Activated CD4-positive, alpha-beta memory T cell treated with anti-CD3 and anti-CD28 coated beads for 36 hours (primary cell): ENCODE measurements at regions of chr6 and their contacts with region 1.

Region 1: GRCh38 chr6:436308-437036 is 44.9 kb downstream of the IRF4 start:
- DNase-seq: no peak
- H3K4me3 Mint-ChIP-seq: no peak overlapping the region
- H3K27ac Mint-ChIP-seq: no peak overlapping the region
- H3K4me1 Mint-ChIP-seq: peaks cover 43% of the 10 kb centered on the region
- H3K27me3 Mint-ChIP-seq: no peaks in the 10 kb centered on the region

Region 2: GRCh38 chr6:168865-169455 is 267.5 kb before region 1 on chr6:
- CTCF ChIA-PET with region 1: no interaction called
- POLR2A ChIA-PET with region 1: no interaction called
- intact Hi-C with region 1: no loop called
- DNase-seq: no peak
- H3K4me3 Mint-ChIP-seq: no peak overlapping the region
- H3K27ac Mint-ChIP-seq: no peak overlapping the region
- H3K4me1 Mint-ChIP-seq: no peaks in the 10 kb centered on the region
- H3K27me3 Mint-ChIP-seq: peaks cover 1% of the 10 kb centered on the region

Region 3: GRCh38 chr6:305371-306206 is 130.9 kb before region 1 on chr6:
- CTCF ChIA-PET with region 1: no interaction called
- POLR2A ChIA-PET with region 1: no interaction called
- intact Hi-C with region 1: no loop called
- DNase-seq: peak; percentile 37
- H3K4me3 Mint-ChIP-seq: no peak overlapping the region
- H3K27ac Mint-ChIP-seq: no peak overlapping the region
- H3K4me1 Mint-ChIP-seq: no peaks in the 10 kb centered on the region
- H3K27me3 Mint-ChIP-seq: no peaks in the 10 kb centered on the region

Region 4: GRCh38 chr6:399785-400534 is 36.5 kb before region 1 on chr6:
- CTCF ChIA-PET with region 1: interaction called, 3 read pairs
- POLR2A ChIA-PET with region 1: interaction called, 14 read pairs
- intact Hi-C with region 1: no loop called
- DNase-seq: peak; percentile 76
- H3K4me3 Mint-ChIP-seq: peak overlapping the region; percentile 64
- H3K27ac Mint-ChIP-seq: peak overlapping the region; percentile 88
- H3K4me1 Mint-ChIP-seq: peaks cover 94% of the 10 kb centered on the region
- H3K27me3 Mint-ChIP-seq: no peaks in the 10 kb centered on the region

Region 5: DNA sequence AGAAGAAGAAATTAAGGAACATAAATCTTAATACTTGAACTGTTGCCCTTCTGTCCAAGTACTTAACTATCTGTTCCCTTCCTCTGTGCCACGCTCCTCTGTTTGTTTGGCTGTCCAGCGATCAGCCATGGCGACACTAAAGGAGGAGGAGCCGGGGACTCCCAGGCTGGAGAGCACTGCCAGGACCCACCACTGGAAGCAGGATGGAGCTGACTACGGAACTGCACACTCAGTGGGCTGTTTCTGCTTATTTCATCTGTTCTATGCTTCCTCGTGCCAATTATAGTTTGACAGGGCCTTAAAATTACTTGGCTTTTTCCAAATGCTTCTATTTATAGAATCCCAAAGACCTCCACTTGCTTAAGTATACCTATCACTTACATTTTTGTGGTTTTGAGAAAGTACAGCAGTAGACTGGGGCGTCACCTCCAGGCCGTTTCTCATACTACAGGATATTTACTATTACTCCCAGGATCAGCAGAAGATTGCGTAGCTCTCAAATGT is 27.8 kb before region 1 on chr6:
- CTCF ChIA-PET with region 1: interaction called, 5 read pairs
- POLR2A ChIA-PET with region 1: interaction called, 17 read pairs
- intact Hi-C with region 1: no loop called
- DNase-seq: no peak
- H3K4me3 Mint-ChIP-seq: peak overlapping the region; percentile 14
- H3K27ac Mint-ChIP-seq: peak overlapping the region; percentile 62
- H3K4me1 Mint-ChIP-seq: peaks cover 66% of the 10 kb centered on the region
- H3K27me3 Mint-ChIP-seq: no peaks in the 10 kb centered on the region

Region 6: DNA sequence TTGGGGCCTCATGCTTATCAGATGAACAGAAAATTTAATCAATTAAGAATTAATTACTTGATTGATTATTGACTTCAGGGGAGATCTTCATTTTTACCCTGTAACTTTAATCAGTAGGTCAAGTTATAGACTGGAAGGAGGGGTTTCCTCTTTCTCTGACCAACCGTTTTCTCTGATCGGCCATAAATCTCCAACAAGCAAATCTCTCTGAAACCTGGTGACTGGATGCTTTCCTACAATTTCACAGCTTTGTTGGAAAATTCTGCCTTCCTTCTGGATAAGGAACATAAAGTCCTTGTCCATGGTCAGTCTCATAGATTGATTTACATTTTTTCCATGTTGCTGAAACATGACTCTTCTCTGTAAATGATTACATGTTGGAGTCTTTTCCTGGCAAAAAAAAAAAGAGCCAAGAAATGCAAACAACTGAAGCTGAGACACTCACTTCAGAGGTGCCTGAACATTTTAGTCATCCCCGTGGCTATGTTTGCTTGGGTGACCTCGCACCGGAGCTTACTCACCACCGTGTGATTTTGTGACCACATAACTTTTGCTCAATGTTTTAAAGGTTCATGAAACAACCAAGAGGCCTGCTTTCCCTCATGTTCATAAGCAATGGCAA is 13.9 kb before region 1 on chr6:
- CTCF ChIA-PET with region 1: interaction called, 3 read pairs
- POLR2A ChIA-PET with region 1: interaction called, 4 read pairs
- intact Hi-C with region 1: loop called (anchors 1 kb)
- DNase-seq: peak; percentile 87
- H3K4me3 Mint-ChIP-seq: no peak overlapping the region
- H3K27ac Mint-ChIP-seq: peak overlapping the region; percentile 87
- H3K4me1 Mint-ChIP-seq: peaks cover 30% of the 10 kb centered on the region
- H3K27me3 Mint-ChIP-seq: no peaks in the 10 kb centered on the region

Region 7: DNA sequence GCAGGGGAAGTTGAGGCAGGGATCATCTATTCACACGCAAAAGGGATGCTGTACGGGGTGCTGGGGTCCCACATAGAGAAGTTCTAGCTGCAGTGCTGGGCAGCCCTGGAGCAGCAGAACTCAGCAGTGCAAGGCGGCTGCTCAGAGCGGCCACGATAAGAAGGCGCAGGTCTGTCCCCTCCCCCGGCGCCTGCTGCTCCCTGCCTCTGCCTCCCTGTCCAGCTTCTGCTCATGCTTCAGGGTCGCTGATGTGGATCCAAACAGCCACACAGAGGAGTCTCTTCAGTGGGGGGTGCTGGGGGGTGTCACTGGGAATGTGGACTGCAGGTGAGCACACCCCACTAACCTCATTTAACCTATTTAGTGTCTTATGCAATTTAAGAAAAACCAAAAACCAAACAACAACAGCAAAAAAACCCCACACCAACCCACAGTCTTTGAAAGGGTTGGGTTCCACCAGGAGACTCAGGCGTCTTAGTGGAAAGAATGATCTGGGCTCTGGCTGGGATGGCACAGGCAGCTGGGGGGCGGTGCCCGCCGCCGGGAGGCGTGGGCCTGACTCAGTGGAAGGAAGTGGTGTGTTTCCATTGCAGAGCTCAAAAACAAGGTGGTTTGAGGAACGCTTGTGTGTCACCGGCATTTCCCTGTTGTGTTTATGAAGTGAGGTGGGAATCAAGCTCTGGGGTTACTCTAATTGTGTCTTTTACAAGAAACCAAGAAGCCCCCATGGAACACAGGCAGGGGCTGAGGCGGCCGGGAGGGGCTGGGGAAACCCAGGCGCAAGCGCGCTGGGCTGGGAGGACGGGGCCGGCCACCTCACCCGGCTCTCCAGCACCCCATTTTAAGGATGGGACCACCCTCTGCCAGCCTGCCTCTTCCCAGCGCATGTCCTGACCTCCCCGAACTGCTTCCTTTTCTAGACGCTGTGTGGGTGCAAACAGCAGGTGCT is 10.2 kb after region 1 on chr6:
- CTCF ChIA-PET with region 1: interaction called, 8 read pairs
- POLR2A ChIA-PET with region 1: interaction called, 51 read pairs
- intact Hi-C with region 1: loop called (anchors 1 kb)
- DNase-seq: peak; percentile 97
- H3K4me3 Mint-ChIP-seq: peak overlapping the region; percentile 77
- H3K27ac Mint-ChIP-seq: peak overlapping the region; percentile 97
- H3K4me1 Mint-ChIP-seq: peaks cover 55% of the 10 kb centered on the region
- H3K27me3 Mint-ChIP-seq: peaks cover 1% of the 10 kb centered on the region

Region 8: GRCh38 chr6:467671-468082 is 31.2 kb after region 1 on chr6:
- CTCF ChIA-PET with region 1: interaction called, 4 read pairs
- POLR2A ChIA-PET with region 1: interaction called, 4 read pairs
- intact Hi-C with region 1: loop called (anchors 1 kb)
- DNase-seq: peak; percentile 67
- H3K4me3 Mint-ChIP-seq: peak overlapping the region; percentile 16
- H3K27ac Mint-ChIP-seq: no peak overlapping the region
- H3K4me1 Mint-ChIP-seq: peaks cover 54% of the 10 kb centered on the region
- H3K27me3 Mint-ChIP-seq: peaks cover 34% of the 10 kb centered on the region

Region 9: GRCh38 chr6:551405-551804 is 114.9 kb after region 1 on chr6:
- CTCF ChIA-PET with region 1: no interaction called
- POLR2A ChIA-PET with region 1: interaction called, 5 read pairs
- intact Hi-C with region 1: loop called (anchors 2 kb)
- DNase-seq: peak; percentile 68
- H3K4me3 Mint-ChIP-seq: no peak overlapping the region
- H3K27ac Mint-ChIP-seq: peak overlapping the region; percentile 97
- H3K4me1 Mint-ChIP-seq: peaks cover 69% of the 10 kb centered on the region
- H3K27me3 Mint-ChIP-seq: no peaks in the 10 kb centered on the region